IMR-90 (cell line): ENCODE measurements at regions of chr19 and their contacts with region 1.

Region 1: DNA sequence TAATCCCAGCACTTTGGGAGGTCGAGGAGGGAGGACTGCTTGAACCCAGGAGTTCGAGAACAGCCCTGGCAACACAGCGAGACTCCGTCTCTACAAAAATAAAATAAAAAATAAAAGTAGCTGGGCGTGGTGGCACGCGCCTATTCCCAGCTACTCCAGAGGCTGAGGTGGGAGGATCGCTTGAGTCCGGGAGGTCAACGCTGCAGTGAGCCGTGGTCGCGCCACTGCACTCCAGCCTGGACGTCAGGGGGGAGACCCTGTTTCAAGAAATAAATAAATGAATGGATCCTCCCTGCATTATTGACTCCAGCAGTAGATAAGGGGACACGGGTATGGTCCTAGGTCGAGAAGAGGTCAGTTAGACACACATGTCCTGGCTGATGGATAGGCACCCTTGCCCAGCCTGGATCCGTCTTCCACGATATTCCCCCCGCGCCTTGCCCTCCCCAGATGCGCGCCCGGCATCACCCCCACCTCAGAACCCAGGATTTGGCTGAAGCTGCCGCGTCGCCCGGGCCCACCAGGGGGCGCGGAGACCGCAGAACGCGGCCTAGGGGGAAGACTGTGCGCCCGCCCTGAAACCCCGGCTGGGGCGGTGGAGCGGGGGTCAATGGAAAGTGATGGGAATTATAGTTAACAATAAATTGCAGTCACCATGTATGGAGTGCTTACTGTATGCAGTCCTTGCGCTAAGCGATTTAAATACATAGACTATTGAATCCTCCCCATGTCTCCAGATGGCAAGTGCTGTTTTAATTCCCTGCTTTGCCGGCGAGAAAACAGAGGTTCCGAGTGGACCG is 2.1 kb upstream of the HOOK2 start:
- DNase-seq: peak; percentile 68
- ATAC-seq: peak; percentile 57
- H3K4me3 ChIP-seq: peak overlapping the region; percentile 62
- H3K27ac ChIP-seq: peak overlapping the region; percentile 82
- H3K4me1 ChIP-seq: peaks cover 24% of the 10 kb centered on the region
- H3K27me3 ChIP-seq: no peaks in the 10 kb centered on the region
- CTCF ChIP-seq: peak; percentile 91
- POLR2A ChIP-seq: no peak
- RAD21 ChIP-seq: peak; percentile 82

Region 2: DNA sequence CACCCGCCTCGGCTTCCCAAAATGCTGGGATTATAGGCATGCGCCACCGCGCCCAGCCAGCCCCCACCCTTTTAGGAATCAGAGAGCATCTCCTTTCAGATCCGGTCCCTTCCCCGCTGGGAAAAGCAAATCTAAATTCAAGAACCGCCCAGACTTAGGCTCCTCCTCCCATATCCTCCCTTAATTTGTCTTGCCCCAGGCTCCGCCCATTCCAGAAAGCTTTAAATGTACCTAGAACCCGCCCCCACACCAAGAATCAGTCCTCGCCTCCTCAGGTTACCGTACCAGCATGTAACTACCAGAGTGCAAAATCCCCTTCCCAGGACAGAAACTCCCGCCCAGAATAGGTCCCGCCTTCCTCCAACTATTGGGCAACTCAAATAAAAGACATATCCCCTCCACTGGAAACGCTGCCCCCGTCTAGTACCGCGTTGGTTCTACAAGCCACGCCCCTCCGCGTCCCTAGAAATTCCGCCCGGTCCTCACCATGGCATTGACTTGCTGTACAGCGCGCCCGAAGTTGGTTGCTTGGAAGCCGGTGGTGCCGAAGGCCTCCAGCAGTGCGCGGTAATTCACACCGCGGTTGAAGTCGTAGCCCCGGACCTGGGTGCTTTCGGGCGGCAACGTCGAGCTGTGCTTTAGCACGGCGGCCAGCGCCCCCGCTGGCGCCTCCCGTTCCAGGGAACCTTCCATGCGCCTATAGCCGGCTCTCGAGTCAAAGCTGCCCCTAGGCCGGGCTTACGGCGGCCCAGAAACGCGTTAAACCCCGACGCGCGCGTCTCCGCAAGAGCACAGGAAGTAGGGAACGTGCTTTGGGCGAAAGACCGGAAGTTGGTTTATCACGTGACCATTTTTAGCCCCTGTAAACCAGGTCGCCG is 96.1 kb before region 1 on chr19 and contains the start of gene DHPS:
- CTCF ChIA-PET with region 1: no interaction called
- POLR2A ChIA-PET with region 1: no interaction called
- dilution Hi-C with region 1: no loop called
- in situ Hi-C with region 1: no loop called
- intact Hi-C with region 1: no loop called
- DNase-seq: peak; percentile 98
- ATAC-seq: peak; percentile 91
- H3K4me3 ChIP-seq: peak within 1 kb of the TSS; percentile 67
- H3K27ac ChIP-seq: peak within 1 kb of the TSS; percentile 61
- H3K4me1 ChIP-seq: no peaks in the 10 kb centered on the region
- H3K27me3 ChIP-seq: no peaks in the 10 kb centered on the region
- CTCF ChIP-seq: no peak
- POLR2A ChIP-seq: peak; percentile 90
- RAD21 ChIP-seq: no peak
- total RNA-seq, gene DHPS: 73.3 and 82.8 TPM in 2 replicates

Region 3: DNA sequence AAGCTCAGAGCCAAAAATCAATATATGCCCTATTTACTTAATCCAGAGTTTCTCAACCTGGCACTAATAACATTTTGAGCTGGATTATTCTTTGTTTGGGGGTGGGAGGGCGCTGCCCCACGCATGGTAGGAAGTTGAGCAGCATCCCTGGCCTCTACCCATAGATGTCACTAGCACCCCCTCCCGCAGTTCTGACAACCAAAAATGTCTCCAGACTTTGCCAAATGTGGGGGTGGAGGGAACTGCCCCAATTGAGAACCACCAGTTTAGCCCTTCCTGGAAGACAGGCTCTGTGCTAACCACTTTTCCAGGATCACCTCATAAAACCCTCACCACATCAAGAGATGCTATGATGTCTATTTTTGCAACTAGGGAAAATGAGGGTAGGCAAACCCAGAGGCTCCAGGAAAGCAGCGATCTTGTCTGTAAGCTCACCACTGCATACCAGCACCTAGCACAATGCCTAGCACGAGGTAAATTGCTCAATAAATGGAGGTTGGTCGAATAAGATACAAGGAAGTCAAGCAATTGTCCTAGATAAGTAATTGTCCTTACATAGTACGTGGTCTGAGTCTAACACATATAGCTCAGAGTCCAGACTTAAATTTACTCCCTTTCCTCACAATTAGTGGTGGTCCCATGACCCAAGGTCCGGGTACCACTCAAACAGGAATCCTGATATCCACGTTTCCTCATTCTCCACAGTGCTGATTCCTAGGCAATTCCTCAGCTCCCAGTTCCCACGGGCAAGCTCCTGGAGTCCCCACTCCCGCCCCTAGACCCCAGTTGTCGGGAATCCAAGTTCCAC is 43.8 kb before region 1 on chr19:
- CTCF ChIA-PET with region 1: no interaction called
- POLR2A ChIA-PET with region 1: no interaction called
- dilution Hi-C with region 1: no loop called
- in situ Hi-C with region 1: no loop called
- intact Hi-C with region 1: no loop called
- DNase-seq: peak; percentile 45
- ATAC-seq: no peak
- H3K4me3 ChIP-seq: peak overlapping the region; percentile 95
- H3K27ac ChIP-seq: peak overlapping the region; percentile 98
- H3K4me1 ChIP-seq: peaks cover 10% of the 10 kb centered on the region
- H3K27me3 ChIP-seq: no peaks in the 10 kb centered on the region
- CTCF ChIP-seq: peak; percentile 49
- POLR2A ChIP-seq: no peak; the same call in 1 of the 2 replicates
- RAD21 ChIP-seq: no peak

Region 4: DNA sequence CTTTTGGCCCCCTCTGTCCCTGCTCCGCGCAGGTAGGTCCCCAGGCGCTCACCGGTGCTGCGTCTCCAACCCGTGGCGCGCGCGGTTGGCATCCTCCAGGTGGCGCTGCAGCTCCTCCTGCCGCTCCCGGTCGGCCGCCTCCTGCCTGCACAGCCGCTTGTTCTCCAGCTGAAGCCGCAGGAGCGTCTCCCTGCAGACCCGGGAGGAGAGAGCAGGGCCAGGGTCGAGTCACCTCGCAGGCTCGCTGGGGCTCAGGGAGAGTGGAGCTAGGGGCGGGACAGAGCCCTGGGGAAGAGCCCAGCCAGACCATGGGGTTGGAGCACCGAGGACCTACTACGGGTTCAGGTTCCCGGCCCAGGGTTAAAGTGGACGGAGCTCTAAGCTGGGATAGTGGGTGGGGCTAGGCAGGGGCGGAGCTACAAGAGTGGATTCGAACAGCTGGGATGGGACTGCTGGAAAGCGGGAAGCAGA is 11.3 kb before region 1 on chr19:
- CTCF ChIA-PET with region 1: interaction called, 14 read pairs
- POLR2A ChIA-PET with region 1: no interaction called
- dilution Hi-C with region 1: no loop called
- in situ Hi-C with region 1: no loop called
- intact Hi-C with region 1: no loop called
- DNase-seq: peak; percentile 73
- ATAC-seq: peak; percentile 99
- H3K4me3 ChIP-seq: peak overlapping the region; percentile 84
- H3K27ac ChIP-seq: no peak overlapping the region; the same call in 1 of the 2 replicates
- H3K4me1 ChIP-seq: no peaks in the 10 kb centered on the region
- H3K27me3 ChIP-seq: no peaks in the 10 kb centered on the region
- CTCF ChIP-seq: peak; percentile 93
- POLR2A ChIP-seq: no peak
- RAD21 ChIP-seq: peak; percentile 87

Region 5: DNA sequence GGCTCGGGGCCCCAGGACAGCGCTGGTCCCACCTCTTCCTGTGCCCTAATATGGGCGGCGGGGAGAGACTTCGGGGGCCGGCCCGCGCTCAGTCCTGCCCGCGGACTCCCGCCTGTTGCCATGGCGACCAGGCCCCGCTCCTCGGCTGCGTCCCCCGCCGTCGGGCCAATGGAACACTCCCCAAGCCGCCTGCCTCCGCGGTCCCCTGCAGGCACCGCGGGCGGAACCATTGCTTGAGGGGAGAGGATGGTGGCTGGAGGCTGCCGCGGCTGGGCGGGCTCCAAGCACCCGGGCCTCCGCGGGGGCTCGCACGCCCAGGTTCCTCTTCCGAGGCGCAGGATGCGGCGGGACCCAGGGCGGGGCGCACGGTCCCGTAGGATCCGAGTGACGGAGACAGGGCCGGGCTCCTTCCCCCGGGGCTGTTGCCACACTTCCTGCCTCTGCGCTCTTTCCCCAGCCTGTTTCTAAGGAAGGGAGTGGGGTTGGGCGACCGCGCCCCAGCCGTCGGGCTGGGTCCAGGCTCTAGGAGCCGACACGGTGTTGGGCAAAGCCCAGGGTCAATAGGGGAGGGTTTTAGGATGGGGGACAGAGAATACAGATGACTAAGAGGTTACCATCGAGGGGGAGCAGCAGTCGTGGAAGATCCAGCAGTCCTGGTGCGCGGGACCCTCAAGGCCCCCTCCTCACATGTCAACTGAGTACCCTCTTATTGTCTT is 12.6 kb after region 1 on chr19:
- CTCF ChIA-PET with region 1: interaction called, 23 read pairs
- POLR2A ChIA-PET with region 1: interaction called, 13 read pairs
- dilution Hi-C with region 1: no loop called
- in situ Hi-C with region 1: no loop called
- intact Hi-C with region 1: loop called (anchors 1 kb)
- DNase-seq: peak; percentile 93
- ATAC-seq: peak; percentile 60
- H3K4me3 ChIP-seq: peak overlapping the region; percentile 39
- H3K27ac ChIP-seq: peak overlapping the region; percentile 89
- H3K4me1 ChIP-seq: peaks cover 27% of the 10 kb centered on the region
- H3K27me3 ChIP-seq: no peaks in the 10 kb centered on the region
- CTCF ChIP-seq: no peak
- POLR2A ChIP-seq: peak; percentile 15; the same call in 1 of the 2 replicates
- RAD21 ChIP-seq: no peak

Region 6: GRCh38 chr19:12796146-12797071 is 19.0 kb after region 1 on chr19:
- CTCF ChIA-PET with region 1: interaction called, 23 read pairs
- POLR2A ChIA-PET with region 1: interaction called, 13 read pairs
- dilution Hi-C with region 1: no loop called
- in situ Hi-C with region 1: no loop called
- intact Hi-C with region 1: loop called (anchors 1 kb)
- DNase-seq: peak; percentile 81
- ATAC-seq: peak; percentile 38
- H3K4me3 ChIP-seq: no peak overlapping the region
- H3K27ac ChIP-seq: no peak overlapping the region
- H3K4me1 ChIP-seq: peaks cover 6% of the 10 kb centered on the region
- H3K27me3 ChIP-seq: no peaks in the 10 kb centered on the region
- CTCF ChIP-seq: peak; percentile 98; the same call in 1 of the 2 replicates
- POLR2A ChIP-seq: peak; percentile 76; the same call in 1 of the 2 replicates
- RAD21 ChIP-seq: peak; percentile 99

Region 7: GRCh38 chr19:12821761-12822160 is 44.3 kb after region 1 on chr19:
- CTCF ChIA-PET with region 1: no interaction called
- POLR2A ChIA-PET with region 1: no interaction called
- dilution Hi-C with region 1: no loop called
- in situ Hi-C with region 1: no loop called
- intact Hi-C with region 1: no loop called
- DNase-seq: no peak
- ATAC-seq: no peak
- H3K4me3 ChIP-seq: no peak overlapping the region
- H3K27ac ChIP-seq: no peak overlapping the region
- H3K4me1 ChIP-seq: no peaks in the 10 kb centered on the region
- H3K27me3 ChIP-seq: no peaks in the 10 kb centered on the region
- CTCF ChIP-seq: no peak
- POLR2A ChIP-seq: no peak
- RAD21 ChIP-seq: no peak

Region 8: DNA sequence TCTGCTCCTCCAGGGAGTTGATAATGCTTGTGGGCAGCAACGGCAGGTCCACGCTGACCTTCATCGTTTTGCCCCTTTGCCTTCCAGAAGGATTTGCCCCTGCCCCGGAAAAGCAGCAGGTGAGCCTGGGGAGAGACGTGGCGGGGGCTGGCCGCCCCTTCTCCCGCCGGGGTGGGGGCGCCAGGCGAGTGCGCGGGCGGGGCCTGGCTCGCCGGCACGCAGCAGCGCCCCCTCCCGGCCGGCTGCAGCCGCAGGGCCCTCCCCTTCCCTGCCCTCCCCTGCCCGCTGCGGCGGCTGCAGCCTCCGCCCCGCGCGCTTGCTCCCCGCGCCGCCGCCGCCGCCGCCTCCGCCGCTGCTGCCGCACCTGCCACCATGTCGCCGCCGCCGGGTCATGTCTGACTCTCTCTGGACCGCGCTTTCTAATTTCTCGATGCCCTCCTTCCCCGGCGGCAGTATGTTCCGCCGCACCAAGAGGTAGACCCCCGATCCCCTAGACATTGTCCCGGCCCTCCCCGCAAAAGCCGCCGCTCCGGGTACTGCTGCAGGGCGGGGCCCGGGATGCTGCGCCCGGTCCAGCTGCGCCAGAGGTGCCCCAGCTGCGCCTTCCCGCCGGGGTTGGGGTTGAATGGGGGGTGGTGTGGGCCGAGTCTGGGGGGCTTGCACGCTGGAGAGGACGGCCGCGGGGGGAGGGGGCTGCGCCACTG is 60.9 kb after region 1 on chr19 and contains the start of gene MAST1:
- CTCF ChIA-PET with region 1: no interaction called
- POLR2A ChIA-PET with region 1: no interaction called
- dilution Hi-C with region 1: no loop called
- in situ Hi-C with region 1: loop called (anchors 5 kb)
- intact Hi-C with region 1: no loop called
- DNase-seq: no peak
- ATAC-seq: peak; percentile 67
- H3K4me3 ChIP-seq: peak within 1 kb of the TSS; percentile 34
- H3K27ac ChIP-seq: no peak within 1 kb of the TSS
- H3K4me1 ChIP-seq: peaks cover 4% of the 10 kb centered on the region; the same call in 1 of the 2 replicates
- H3K27me3 ChIP-seq: peaks cover 71% of the 10 kb centered on the region
- CTCF ChIP-seq: peak; percentile 59
- POLR2A ChIP-seq: no peak
- RAD21 ChIP-seq: peak; percentile 28; the same call in 1 of the 2 replicates
- total RNA-seq, gene MAST1: 0.28 and 1.1 TPM in 2 replicates

Region 9: DNA sequence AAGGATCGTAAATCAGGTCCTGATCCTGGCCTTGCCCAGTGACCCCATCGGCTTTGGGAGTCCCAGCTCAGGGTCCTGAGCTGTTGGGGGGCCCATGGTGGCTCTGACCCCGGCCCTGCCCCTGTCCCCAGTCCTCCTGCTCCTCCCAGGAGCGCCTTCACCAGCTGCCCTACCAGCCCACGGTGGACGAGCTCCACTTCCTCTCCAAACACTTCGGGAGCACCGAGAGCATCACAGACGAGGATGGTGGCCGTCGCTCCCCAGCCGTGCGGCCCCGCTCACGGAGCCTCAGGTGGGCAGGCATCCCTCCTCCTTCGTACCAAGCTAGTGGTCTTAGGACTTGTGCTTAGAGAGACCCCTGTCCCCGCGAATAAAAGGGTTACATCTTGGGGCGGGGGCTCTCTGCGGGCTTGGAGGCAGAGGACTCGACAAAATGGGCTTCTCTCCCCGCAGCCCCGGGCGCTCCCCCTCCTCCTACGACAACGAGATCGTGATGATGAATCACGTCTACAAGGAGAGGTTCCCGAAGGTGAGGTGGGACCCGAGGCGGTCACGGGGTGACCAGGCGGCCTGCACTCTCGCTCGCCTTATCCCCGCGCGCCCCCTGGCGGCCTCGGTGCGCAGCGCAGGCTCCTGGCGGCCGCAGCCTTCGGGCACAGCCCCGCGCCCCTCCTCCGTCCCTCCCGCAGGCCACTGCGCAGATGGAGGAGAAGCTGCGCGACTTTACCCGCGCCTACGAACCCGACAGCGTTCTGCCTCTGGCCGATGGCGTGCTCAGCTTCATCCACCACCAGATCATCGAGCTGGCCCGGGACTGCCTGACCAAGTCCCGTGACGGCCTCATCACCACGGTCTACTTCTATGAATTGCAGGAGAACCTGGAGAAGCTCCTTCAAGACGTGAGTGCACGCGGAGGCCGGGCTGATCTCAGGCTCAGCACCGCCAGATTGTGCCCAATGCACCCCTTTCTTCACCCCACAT is 70.0 kb after region 1 on chr19:
- CTCF ChIA-PET with region 1: interaction called, 10 read pairs
- POLR2A ChIA-PET with region 1: no interaction called
- dilution Hi-C with region 1: no loop called
- in situ Hi-C with region 1: no loop called
- intact Hi-C with region 1: no loop called
- DNase-seq: peak; percentile 73
- ATAC-seq: peak; percentile 100
- H3K4me3 ChIP-seq: peak overlapping the region; percentile 21; the same call in 1 of the 2 replicates
- H3K27ac ChIP-seq: no peak overlapping the region
- H3K4me1 ChIP-seq: peaks cover 3% of the 10 kb centered on the region; the same call in 1 of the 2 replicates
- H3K27me3 ChIP-seq: peaks cover 10% of the 10 kb centered on the region; the same call in 1 of the 2 replicates
- CTCF ChIP-seq: peak; percentile 98
- POLR2A ChIP-seq: no peak
- RAD21 ChIP-seq: peak; percentile 96

Region 10: GRCh38 chr19:12974301-12975220 is 197.1 kb after region 1 on chr19:
- CTCF ChIA-PET with region 1: no interaction called
- POLR2A ChIA-PET with region 1: no interaction called
- dilution Hi-C with region 1: no loop called
- in situ Hi-C with region 1: no loop called
- intact Hi-C with region 1: no loop called
- DNase-seq: no peak
- ATAC-seq: no peak
- H3K4me3 ChIP-seq: no peak overlapping the region
- H3K27ac ChIP-seq: no peak overlapping the region
- H3K4me1 ChIP-seq: no peaks in the 10 kb centered on the region; the same call in 1 of the 2 replicates
- H3K27me3 ChIP-seq: no peaks in the 10 kb centered on the region
- CTCF ChIP-seq: no peak
- POLR2A ChIP-seq: no peak
- RAD21 ChIP-seq: no peak